Heart left ventricle (tissue), 16 donors: ENCODE measurements at regions of chr7 and their contacts with region 1.

Region 1: GRCh38 chr7:25259587-25260243 is 31.4 kb upstream of the NPVF start:
- DNase-seq: peak in 4 of 5 donors; percentile 45 to 61 (median 49)
- ATAC-seq: peak in 3 of 4 donors; percentile 67 to 87 (median 73)
- H3K4me3 ChIP-seq: no peak overlapping the region
- H3K27ac ChIP-seq: no peak overlapping the region
- H3K4me1 ChIP-seq: peaks cover 0 to 23% (median 2%) of the 10 kb centered on the region in 12 donors
- H3K27me3 ChIP-seq: peaks cover 0 to 12% (median 0%) of the 10 kb centered on the region in 9 donors
- CTCF ChIP-seq: peak; percentile 66 to 88 (median 78)
- POLR2A ChIP-seq: no peak

Region 2: DNA sequence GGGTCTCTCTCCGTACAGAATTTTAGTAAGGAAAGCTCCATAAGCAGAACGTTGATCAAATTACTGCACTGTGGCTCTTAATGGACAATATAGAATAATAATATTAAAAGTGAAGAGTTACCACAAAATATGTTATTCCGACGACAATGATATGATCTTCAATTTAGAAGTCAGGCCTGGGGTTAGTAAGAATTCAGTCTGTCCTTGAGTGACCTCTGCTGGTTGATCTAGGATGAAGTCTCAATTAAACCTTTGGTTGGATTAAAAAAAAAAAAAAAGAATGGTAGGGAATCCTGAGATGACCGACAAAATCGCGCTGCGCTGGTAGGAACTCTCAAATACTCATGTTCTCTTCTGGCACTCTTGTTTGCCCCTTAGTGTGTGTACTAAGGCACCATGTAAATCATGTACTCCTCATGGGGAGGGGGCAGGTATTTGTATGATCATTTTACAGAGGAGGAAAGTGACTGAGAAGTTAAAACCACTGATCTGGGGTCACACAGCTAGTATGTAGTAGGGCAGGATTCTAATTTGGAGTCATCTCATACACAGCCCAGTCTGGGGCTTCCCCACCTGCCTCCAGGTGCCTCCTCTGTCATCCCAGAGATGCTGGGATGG is 129.9 kb after region 1 on chr7:
- intact Hi-C with region 1: loop called (anchors 1 to 5 kb)
- DNase-seq: no peak
- ATAC-seq: peak in 3 of 4 donors; percentile 22 to 49 (median 38)
- H3K4me3 ChIP-seq: no peak overlapping the region
- H3K27ac ChIP-seq: no peak overlapping the region
- H3K4me1 ChIP-seq: peaks cover 0 to 17% (median 2%) of the 10 kb centered on the region in 12 donors
- H3K27me3 ChIP-seq: peaks cover 0 to 6% (median 0%) of the 10 kb centered on the region in 9 donors
- CTCF ChIP-seq: peak; percentile 25 to 65 (median 46)
- POLR2A ChIP-seq: no peak

Region 3: DNA sequence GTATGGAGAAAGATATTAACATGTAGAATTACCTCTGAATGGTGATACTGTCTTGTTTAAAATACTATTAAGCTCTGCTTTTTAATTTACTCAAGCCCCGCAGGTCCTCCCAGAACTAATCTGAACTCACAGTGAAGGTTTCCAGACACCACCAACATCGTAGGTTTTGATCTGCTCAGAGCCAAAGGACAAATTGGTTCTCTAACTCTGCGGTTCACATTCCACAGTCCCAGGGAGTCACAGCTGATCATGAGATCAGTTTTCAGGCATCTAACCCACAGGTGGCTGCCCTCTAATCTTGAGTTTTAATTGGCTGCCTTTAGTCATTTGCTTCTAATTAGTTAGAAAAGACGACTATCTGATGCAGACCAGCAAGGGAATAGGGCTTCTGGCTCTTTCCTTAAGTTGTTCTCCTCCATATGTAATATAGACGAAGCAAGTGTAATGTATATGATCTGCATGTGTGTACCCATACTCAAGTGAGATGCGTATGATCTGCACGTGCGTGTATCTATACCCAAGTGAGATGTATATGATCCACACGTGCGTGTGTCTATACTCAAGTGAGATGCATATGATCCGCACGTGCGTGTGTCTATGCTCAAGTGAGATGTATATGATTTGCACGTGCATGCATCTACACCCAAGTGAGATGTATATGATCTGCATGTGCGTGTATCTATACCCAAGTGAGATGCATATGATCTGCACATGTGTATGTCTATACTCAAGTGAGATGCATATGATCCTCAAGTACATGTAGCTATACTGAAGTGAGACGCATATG is 300.1 kb after region 1 on chr7:
- intact Hi-C with region 1: loop called in 5 of 10 experiments (anchors 2 kb)
- DNase-seq: no peak
- ATAC-seq: peak in 1 of 4 donors; percentile 29
- H3K4me3 ChIP-seq: no peak overlapping the region
- H3K27ac ChIP-seq: no peak overlapping the region
- H3K4me1 ChIP-seq: no peaks in the 10 kb centered on the region
- H3K27me3 ChIP-seq: no peaks in the 10 kb centered on the region
- CTCF ChIP-seq: no peak
- POLR2A ChIP-seq: no peak

Region 4: GRCh38 chr7:25565949-25566348 is 306.2 kb after region 1 on chr7:
- intact Hi-C with region 1: loop called (anchors 1 to 5 kb)
- DNase-seq: peak in 3 of 5 donors; percentile 49 to 55 (median 50)
- ATAC-seq: no peak
- H3K4me3 ChIP-seq: peak overlapping the region in 1 of 12 donors; percentile 13
- H3K27ac ChIP-seq: no peak overlapping the region
- H3K4me1 ChIP-seq: peaks cover 0 to 6% (median 0%) of the 10 kb centered on the region in 12 donors
- H3K27me3 ChIP-seq: no peaks in the 10 kb centered on the region
- CTCF ChIP-seq: peak; percentile 99 to 100 (median 100)
- POLR2A ChIP-seq: no peak

Region 5: GRCh38 chr7:26365077-26365900 is 1105.6 kb after region 1 on chr7:
- intact Hi-C with region 1: loop called in 1 of 10 experiments (anchors 10 kb)
- DNase-seq: peak in 2 of 5 donors; percentile 31 to 40
- ATAC-seq: peak; percentile 47 to 87 (median 84)
- H3K4me3 ChIP-seq: no peak overlapping the region
- H3K27ac ChIP-seq: no peak overlapping the region
- H3K4me1 ChIP-seq: peaks cover 0 to 15% (median 0%) of the 10 kb centered on the region in 12 donors
- H3K27me3 ChIP-seq: peaks cover 0 to 44% (median 12%) of the 10 kb centered on the region in 9 donors
- CTCF ChIP-seq: peak; percentile 36 to 84 (median 74)
- POLR2A ChIP-seq: no peak